ENCODE measurements at regions of chr2 and their contacts with region 1.

Region 1: DNA sequence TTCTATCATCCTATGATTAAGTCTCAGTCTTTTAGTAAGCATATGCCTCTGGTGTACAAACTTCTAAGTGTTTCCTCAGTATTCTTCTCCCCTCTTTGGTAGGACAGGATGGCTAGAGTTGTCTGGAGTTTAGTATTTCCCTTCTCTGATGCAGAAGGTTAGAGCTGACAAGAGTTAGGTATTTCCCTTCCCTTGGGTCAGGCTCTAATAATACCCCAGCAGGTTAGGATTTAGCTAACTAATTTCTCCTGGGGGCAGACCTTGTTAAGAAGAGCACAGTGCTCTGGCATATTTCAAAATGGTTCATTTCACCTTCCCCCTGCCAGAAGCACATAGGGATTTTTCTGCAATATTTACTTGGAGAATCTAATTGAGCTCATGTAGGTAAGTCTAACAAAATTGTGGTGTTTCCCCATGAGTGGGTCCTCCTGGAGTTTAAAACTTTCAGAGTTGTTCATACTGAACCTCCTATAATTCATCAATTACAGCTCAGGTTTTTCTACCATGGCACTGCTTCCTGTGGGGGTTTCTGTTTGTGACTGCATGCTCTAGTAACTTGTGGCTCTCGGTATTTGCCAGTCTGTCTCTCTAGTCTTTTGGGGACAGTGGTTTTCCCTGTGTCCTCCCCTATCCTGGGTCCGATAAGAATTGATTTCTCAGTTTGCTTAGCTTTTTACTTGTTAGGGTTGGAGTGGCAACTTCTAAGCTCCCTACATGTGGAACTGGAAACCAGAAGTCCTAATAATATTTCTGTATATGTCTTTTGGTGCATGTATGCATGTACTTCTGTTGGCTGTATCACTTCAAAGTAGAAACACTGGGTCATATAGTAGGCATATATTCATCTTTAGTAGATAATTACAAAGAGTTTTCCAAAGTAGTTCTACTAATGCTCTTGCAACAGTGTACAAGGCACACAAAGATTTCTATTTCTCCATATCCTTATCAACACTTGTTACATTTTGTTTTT is 77.7 kb downstream of the GDF7 start:
- DNase-seq: no peak
- ATAC-seq: no peak

Region 2: GRCh38 chr2:20675701-20676352 is 68.8 kb before region 1 on chr2:
- intact Hi-C with region 1: no loop called
- DNase-seq: no peak
- ATAC-seq: peak; percentile 46

Region 3: DNA sequence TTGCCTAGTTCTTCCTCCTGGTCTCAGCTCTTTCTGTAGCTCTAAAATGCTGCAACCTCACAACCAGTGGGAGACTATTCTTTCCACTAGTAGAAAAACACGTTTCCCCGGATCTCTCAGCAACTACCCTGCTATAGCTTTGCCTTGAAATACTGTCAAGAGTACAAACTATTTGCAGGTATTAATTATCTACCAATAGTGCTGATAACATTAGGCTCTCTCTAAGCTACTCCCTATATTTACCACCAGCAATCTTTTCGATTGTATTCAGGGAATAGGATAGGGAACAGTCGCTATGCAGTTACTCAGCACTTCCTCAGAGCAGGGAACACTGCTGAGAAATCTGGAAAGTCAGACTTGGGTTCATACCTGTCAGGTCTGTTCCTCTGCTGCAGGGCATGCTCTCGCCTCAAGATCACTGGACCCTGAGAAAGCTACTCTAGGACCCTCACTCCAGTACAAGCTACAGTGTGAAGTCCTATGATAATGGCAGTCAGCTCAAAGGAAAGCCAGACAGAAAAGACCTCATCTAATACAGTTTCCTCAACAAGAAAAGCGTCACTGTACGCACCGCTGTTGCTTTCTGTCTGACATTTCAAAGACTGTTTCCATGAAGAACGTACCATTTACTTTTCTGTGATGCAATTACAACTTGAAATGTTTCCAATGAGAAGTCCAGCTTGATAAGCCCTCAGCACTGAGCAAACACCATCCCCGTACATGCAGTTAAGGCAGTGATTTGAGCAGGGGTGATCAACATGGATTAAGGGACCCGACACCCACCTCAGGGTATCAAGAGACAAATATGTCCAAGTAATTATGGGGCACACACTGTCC is 55.0 kb before region 1 on chr2:
- intact Hi-C with region 1: loop called (anchors 5 kb)
- DNase-seq: no peak
- ATAC-seq: no peak

Measured in sciatic nerve (tissue), 2 donors.